PC-9 (cell line): ENCODE measurements at regions of chr3 and their contacts with region 1.

Region 1: GRCh38 chr3:151918253-151919029 is 45.0 kb downstream of the SUCNR1 start:
- DNase-seq: peak in 1 of 2 experiments; percentile 49
- H3K4me3 ChIP-seq: no peak overlapping the region
- H3K27ac ChIP-seq: no peak overlapping the region
- H3K4me1 ChIP-seq: no peaks in the 10 kb centered on the region
- H3K27me3 ChIP-seq: no peaks in the 10 kb centered on the region
- CTCF ChIP-seq: peak; percentile 77

Region 2: GRCh38 chr3:151227807-151228665 is 690.4 kb before region 1 on chr3:
- CTCF ChIA-PET with region 1: no interaction called
- POLR2A ChIA-PET with region 1: no interaction called
- intact Hi-C with region 1: loop called (anchors 5 kb)
- DNase-seq: peak; percentile 68 to 75
- H3K4me3 ChIP-seq: no peak overlapping the region
- H3K27ac ChIP-seq: peak overlapping the region; percentile 40
- H3K4me1 ChIP-seq: peaks cover 28% of the 10 kb centered on the region
- H3K27me3 ChIP-seq: no peaks in the 10 kb centered on the region
- CTCF ChIP-seq: peak; percentile 98

Region 3: GRCh38 chr3:151290673-151291072 is 627.8 kb before region 1 on chr3:
- CTCF ChIA-PET with region 1: no interaction called
- POLR2A ChIA-PET with region 1: no interaction called
- intact Hi-C with region 1: loop called (anchors 1 kb)
- DNase-seq: peak in 1 of 2 experiments; percentile 46
- H3K4me3 ChIP-seq: no peak overlapping the region
- H3K27ac ChIP-seq: no peak overlapping the region
- H3K4me1 ChIP-seq: no peaks in the 10 kb centered on the region
- H3K27me3 ChIP-seq: no peaks in the 10 kb centered on the region
- CTCF ChIP-seq: peak; percentile 88

Region 4: DNA sequence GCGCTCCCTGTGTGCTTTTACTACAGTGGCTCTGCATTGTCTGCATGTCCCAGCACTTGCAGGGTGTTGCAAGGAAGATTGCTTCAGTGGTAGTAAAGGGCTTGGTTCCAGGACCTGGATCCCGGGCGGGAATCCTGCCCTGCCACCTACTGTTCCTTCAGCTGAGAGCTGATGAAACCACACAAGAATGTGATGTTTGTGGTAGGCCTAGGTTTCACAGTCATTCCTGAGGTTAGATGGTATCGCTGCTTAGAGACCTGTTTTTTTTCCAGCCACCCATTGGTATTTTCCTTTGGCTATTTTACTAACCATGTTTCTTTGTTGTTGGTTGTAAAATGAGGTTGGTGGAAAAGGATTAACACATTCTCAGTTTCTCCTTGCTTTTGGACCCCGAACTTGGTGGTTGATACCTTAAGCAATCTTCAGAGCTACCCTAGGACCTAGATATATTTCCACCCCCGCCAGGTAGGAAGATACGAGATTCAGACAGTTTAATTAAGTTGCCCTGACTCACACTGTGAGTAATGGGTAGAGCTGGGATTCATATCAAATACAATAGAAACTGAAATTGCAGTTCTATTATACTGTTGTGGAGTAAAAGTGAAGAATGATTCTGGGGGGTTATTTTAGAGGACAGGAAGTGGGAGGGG is 613.2 kb before region 1 on chr3:
- CTCF ChIA-PET with region 1: no interaction called
- POLR2A ChIA-PET with region 1: no interaction called
- intact Hi-C with region 1: loop called (anchors 5 kb)
- DNase-seq: peak; percentile 95 to 99
- H3K4me3 ChIP-seq: peak overlapping the region; percentile 51; the same call in 1 of the 2 replicates
- H3K27ac ChIP-seq: peak overlapping the region; percentile 96
- H3K4me1 ChIP-seq: peaks cover 77% of the 10 kb centered on the region
- H3K27me3 ChIP-seq: no peaks in the 10 kb centered on the region
- CTCF ChIP-seq: no peak

Region 5: GRCh38 chr3:151439652-151440129 is 478.8 kb before region 1 on chr3:
- CTCF ChIA-PET with region 1: no interaction called
- POLR2A ChIA-PET with region 1: no interaction called
- intact Hi-C with region 1: loop called (anchors 1 kb)
- DNase-seq: peak; percentile 40 to 55
- H3K4me3 ChIP-seq: no peak overlapping the region
- H3K27ac ChIP-seq: no peak overlapping the region
- H3K4me1 ChIP-seq: peaks cover under 1% of the 10 kb centered on the region; the same call in 1 of the 2 replicates
- H3K27me3 ChIP-seq: no peaks in the 10 kb centered on the region
- CTCF ChIP-seq: peak; percentile 91

Region 6: GRCh38 chr3:152444029-152444641 is 525.7 kb after region 1 on chr3:
- CTCF ChIA-PET with region 1: no interaction called
- POLR2A ChIA-PET with region 1: interaction called, 4 read pairs
- intact Hi-C with region 1: loop called (anchors 5 kb)
- DNase-seq: peak in 1 of 2 experiments; percentile 63
- H3K4me3 ChIP-seq: no peak overlapping the region
- H3K27ac ChIP-seq: peak overlapping the region; percentile 10; the same call in 1 of the 2 replicates
- H3K4me1 ChIP-seq: no peaks in the 10 kb centered on the region
- H3K27me3 ChIP-seq: no peaks in the 10 kb centered on the region
- CTCF ChIP-seq: peak; percentile 87

Region 7: GRCh38 chr3:152574461-152575079 is 656.1 kb after region 1 on chr3:
- CTCF ChIA-PET with region 1: no interaction called
- POLR2A ChIA-PET with region 1: no interaction called
- intact Hi-C with region 1: loop called (anchors 5 kb)
- DNase-seq: peak in 1 of 2 experiments; percentile 46
- H3K4me3 ChIP-seq: no peak overlapping the region
- H3K27ac ChIP-seq: no peak overlapping the region
- H3K4me1 ChIP-seq: no peaks in the 10 kb centered on the region
- H3K27me3 ChIP-seq: no peaks in the 10 kb centered on the region
- CTCF ChIP-seq: peak; percentile 74